Activated CD8-positive, alpha-beta T cell treated with anti-CD3 and anti-CD28 coated beads for 36 hours (primary cell): ENCODE measurements at regions of chr5 and their contacts with region 1.

Region 1: DNA sequence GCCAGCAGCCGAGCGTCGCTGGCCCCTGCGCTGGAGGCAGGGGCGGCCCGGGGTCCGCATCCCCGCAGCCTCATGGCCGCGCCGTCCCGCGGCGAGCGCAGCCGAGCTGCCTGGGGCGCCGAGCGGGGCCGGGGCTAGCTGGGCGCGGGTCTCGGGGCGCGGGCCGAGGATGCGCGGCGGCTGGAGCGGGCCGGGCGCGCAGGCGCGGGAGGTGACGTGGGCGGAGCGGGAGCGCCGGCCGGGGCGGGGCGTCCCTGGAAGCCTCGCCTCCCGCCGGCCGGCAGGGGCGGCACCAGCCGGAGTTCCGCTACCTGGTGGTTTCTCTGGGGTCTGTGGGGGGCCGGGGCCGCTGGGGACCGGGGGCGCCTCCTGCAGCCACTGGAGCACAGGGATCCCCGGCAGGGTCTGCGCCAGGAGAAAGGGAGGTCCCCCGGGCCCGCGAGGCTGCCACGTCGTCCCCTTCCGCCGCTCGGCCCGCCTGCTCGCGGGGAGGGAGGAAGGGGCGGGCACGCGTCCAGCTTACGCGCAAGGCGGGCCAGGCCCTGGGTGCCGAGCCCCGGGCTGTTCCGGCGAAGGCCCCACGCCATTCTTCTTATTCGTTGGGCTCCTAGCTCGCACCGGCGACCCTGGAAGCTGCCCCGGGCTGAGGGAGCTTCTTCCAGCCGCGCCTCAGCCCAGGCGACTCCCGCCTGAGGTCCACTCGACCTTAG is at the start of gene LPCAT1:
- DNase-seq: peak; percentile 78
- ATAC-seq: peak; percentile 89
- H3K4me3 Mint-ChIP-seq: peak within 1 kb of the TSS; percentile 82
- H3K27ac Mint-ChIP-seq: peak within 1 kb of the TSS; percentile 72
- H3K4me1 Mint-ChIP-seq: peaks cover 41% of the 10 kb centered on the region
- H3K27me3 Mint-ChIP-seq: no peaks in the 10 kb centered on the region
- CTCF ChIP-seq: no peak
- total RNA-seq, gene LPCAT1: 37.2 to 43.6 TPM

Region 2: DNA sequence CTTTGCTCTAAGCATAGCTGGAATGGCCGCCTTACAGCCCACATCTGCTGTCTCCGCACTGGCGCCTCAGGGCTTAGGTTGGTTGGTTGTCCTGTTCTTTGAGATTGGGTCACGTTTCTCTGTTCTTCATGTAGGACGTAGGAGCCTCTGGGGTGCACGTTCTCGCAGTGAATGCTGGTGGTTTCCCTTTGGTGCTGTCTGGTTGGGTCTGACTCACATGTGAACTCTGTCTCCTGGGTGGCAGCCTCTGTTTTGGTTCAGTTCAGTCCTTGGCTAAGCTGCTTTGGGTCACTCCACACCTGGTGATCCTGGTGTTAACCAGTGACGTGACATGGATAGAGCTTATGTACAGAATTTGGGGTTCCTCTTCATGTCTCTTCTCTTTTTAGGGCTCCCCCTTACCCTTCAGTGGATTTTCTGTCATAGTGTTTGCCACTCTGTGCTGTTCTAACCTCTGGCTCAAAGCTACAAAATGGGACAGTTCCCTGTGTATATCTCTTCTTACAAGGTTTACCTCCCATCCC is 12.5 kb after region 1 on chr5:
- CTCF ChIA-PET with region 1: interaction called, 11 read pairs
- POLR2A ChIA-PET with region 1: interaction called, 14 read pairs
- intact Hi-C with region 1: no loop called
- DNase-seq: peak; percentile 88
- ATAC-seq: peak; percentile 99
- H3K4me3 Mint-ChIP-seq: peak overlapping the region; percentile 71
- H3K27ac Mint-ChIP-seq: peak overlapping the region; percentile 86
- H3K4me1 Mint-ChIP-seq: peaks cover 23% of the 10 kb centered on the region
- H3K27me3 Mint-ChIP-seq: no peaks in the 10 kb centered on the region
- CTCF ChIP-seq: no peak

Region 3: GRCh38 chr5:1555011-1555807 is 31.3 kb after region 1 on chr5:
- CTCF ChIA-PET with region 1: no interaction called
- POLR2A ChIA-PET with region 1: no interaction called
- intact Hi-C with region 1: no loop called
- DNase-seq: no peak
- ATAC-seq: no peak
- H3K4me3 Mint-ChIP-seq: no peak overlapping the region
- H3K27ac Mint-ChIP-seq: no peak overlapping the region
- H3K4me1 Mint-ChIP-seq: peaks cover 3% of the 10 kb centered on the region
- H3K27me3 Mint-ChIP-seq: no peaks in the 10 kb centered on the region
- CTCF ChIP-seq: no peak